ENCODE measurements at regions of chr14 and their contacts with region 1.

Region 1: GRCh38 chr14:34227834-34228649 is 234.0 kb downstream of the SPTSSA start:
- DNase-seq: peak; percentile 76 to 82
- H3K4me3 ChIP-seq: no peak overlapping the region
- H3K4me3 Mint-ChIP-seq: peak overlapping the region; percentile 61
- H3K27ac Mint-ChIP-seq: peak overlapping the region; percentile 80
- H3K4me1 ChIP-seq: peaks cover 51% of the 10 kb centered on the region
- H3K4me1 Mint-ChIP-seq: peaks cover 54% of the 10 kb centered on the region
- H3K27me3 ChIP-seq: no peaks in the 10 kb centered on the region
- H3K27me3 Mint-ChIP-seq: no peaks in the 10 kb centered on the region
- CTCF ChIP-seq: peak; percentile 70 to 92

Region 2: DNA sequence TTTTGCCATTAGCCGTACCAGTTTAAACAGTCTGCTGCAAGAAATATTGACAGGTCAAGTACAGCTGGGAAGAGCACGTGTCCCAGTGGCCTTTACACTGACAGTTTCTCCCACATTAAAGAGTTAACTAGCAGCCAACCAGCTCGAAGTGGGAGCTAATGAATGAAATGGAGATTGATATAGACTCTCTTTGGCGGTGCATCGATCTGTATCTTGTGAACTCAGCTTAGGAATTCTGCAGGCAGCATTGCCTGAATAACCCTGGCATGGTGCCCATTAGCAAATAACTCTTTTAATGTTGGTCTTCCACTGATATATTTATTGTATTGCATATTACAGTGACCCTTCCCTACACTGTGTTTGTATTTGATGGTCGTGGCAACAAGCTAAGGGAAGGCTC is 596.6 kb before region 1 on chr14:
- CTCF ChIA-PET with region 1: no interaction called
- POLR2A ChIA-PET with region 1: no interaction called
- intact Hi-C with region 1: no loop called
- DNase-seq: no peak
- H3K4me3 ChIP-seq: no peak overlapping the region
- H3K4me3 Mint-ChIP-seq: no peak overlapping the region
- H3K27ac Mint-ChIP-seq: no peak overlapping the region
- H3K4me1 ChIP-seq: no peaks in the 10 kb centered on the region
- H3K4me1 Mint-ChIP-seq: no peaks in the 10 kb centered on the region
- H3K27me3 ChIP-seq: no peaks in the 10 kb centered on the region
- H3K27me3 Mint-ChIP-seq: peaks cover 13% of the 10 kb centered on the region
- CTCF ChIP-seq: no peak

Region 3: GRCh38 chr14:33810308-33810707 is 417.7 kb before region 1 on chr14:
- CTCF ChIA-PET with region 1: no interaction called
- POLR2A ChIA-PET with region 1: no interaction called
- intact Hi-C with region 1: no loop called
- DNase-seq: no peak
- H3K4me3 ChIP-seq: no peak overlapping the region
- H3K4me3 Mint-ChIP-seq: no peak overlapping the region
- H3K27ac Mint-ChIP-seq: no peak overlapping the region
- H3K4me1 ChIP-seq: no peaks in the 10 kb centered on the region
- H3K4me1 Mint-ChIP-seq: no peaks in the 10 kb centered on the region
- H3K27me3 ChIP-seq: no peaks in the 10 kb centered on the region
- H3K27me3 Mint-ChIP-seq: peaks cover 3% of the 10 kb centered on the region
- CTCF ChIP-seq: no peak

Region 4: DNA sequence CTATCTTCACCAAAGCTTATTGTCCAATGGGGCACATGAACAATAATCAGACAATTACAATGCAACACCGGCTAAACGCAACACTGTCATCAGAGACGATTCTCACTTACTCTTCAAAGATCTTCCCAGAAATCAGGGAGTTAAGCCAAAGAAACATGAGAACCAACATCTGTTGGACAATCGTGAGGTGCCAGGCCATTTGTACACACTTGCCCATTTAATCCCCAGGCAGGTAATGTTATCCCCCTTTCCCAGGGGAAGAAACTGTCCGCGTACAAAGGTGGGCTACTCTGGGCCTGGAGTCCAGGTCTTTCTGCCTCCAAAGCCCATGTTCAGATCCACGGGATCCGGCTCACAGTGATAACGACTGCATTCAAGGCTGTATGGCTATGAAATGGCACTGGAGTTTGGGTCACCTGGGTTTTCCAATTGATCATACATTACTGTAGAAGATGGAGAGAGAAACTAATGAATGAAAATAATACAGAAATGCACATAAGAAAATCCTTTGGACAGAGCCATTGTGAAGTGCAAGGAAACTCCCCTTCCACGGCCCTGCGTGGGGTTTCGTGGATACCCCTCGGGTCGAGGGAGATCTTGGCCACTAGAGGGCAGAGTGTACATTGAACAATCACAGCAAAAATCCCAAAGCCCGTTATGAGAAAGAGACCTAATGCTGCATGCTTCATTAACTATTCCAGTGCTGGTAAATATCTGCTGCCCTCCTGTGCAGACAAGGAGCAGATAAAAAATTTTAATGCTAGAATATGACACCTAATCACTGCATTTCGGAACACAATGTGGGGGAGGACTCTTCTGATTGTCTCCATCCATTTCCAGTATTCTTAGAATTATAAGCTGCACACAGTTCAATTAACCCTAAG is 388.6 kb before region 1 on chr14:
- CTCF ChIA-PET with region 1: no interaction called
- POLR2A ChIA-PET with region 1: no interaction called
- intact Hi-C with region 1: loop called (anchors 1 kb)
- DNase-seq: peak; percentile 54 to 73
- H3K4me3 ChIP-seq: no peak overlapping the region
- H3K4me3 Mint-ChIP-seq: no peak overlapping the region
- H3K27ac Mint-ChIP-seq: no peak overlapping the region
- H3K4me1 ChIP-seq: peaks cover 10% of the 10 kb centered on the region
- H3K4me1 Mint-ChIP-seq: no peaks in the 10 kb centered on the region
- H3K27me3 ChIP-seq: no peaks in the 10 kb centered on the region
- H3K27me3 Mint-ChIP-seq: no peaks in the 10 kb centered on the region
- CTCF ChIP-seq: peak; percentile 74 to 78

Region 5: GRCh38 chr14:33950320-33951182 is 277.5 kb before region 1 on chr14 and contains the start of gene EGLN3:
- CTCF ChIA-PET with region 1: no interaction called
- POLR2A ChIA-PET with region 1: no interaction called
- intact Hi-C with region 1: loop called (anchors 2 kb)
- DNase-seq: peak; percentile 90 to 94
- H3K4me3 ChIP-seq: peak within 1 kb of the TSS; percentile 57
- H3K4me3 Mint-ChIP-seq: peak within 1 kb of the TSS; percentile 92
- H3K27ac Mint-ChIP-seq: peak within 1 kb of the TSS; percentile 70
- H3K4me1 ChIP-seq: peaks cover 9% of the 10 kb centered on the region
- H3K4me1 Mint-ChIP-seq: peaks cover 10% of the 10 kb centered on the region
- H3K27me3 ChIP-seq: no peaks in the 10 kb centered on the region
- H3K27me3 Mint-ChIP-seq: no peaks in the 10 kb centered on the region
- CTCF ChIP-seq: no peak
- total RNA-seq, gene EGLN3: 9.5 and 12.0 TPM in 2 replicates

Region 6: DNA sequence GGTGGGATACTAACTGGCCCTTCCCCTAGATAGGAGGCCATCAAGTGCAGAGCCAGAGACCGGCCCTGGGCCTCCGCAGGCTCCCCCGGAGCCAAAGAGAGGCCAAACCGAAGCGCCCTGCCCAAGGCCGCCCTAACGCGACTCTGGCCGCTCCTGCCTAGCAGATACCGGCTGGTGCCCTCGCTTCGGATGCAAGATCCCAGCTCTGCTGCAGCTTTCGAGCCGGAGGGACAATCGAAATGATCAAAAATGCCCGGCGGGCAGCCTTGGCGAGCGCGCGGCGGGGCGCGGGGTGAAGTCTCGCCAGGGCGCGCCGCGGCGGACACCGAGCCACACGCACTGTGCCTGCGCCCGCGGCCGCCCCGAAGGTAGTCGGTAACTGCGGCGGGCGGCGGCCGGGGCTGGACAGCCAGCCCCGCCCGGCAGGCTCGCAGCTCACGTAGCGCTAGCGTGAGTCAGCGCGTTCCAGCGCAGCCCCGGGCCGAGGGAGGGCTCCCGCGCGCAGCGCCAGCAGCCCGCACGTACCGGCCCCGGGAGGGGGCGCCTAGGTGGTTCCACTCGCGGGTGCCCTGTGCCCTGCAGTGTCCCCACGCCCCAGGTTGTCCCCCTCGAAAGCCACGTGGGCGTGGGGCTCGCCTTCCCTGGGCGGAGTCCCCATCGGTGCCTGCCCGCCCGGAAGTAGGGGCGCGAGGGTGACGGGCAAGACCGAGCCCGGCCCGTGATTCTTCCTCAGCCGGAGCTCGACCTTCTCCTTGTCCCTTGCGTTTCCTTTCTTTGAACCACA is 168.0 kb before region 1 on chr14:
- CTCF ChIA-PET with region 1: interaction called, 4 read pairs
- POLR2A ChIA-PET with region 1: no interaction called
- intact Hi-C with region 1: loop called (anchors 10 kb)
- DNase-seq: peak; percentile 82 to 88
- H3K4me3 ChIP-seq: peak overlapping the region; percentile 65
- H3K4me3 Mint-ChIP-seq: peak overlapping the region; percentile 89
- H3K27ac Mint-ChIP-seq: peak overlapping the region; percentile 96
- H3K4me1 ChIP-seq: peaks cover 19% of the 10 kb centered on the region
- H3K4me1 Mint-ChIP-seq: peaks cover 7% of the 10 kb centered on the region
- H3K27me3 ChIP-seq: no peaks in the 10 kb centered on the region
- H3K27me3 Mint-ChIP-seq: no peaks in the 10 kb centered on the region
- CTCF ChIP-seq: peak in 1 of 2 experiments; percentile 18

Region 7: DNA sequence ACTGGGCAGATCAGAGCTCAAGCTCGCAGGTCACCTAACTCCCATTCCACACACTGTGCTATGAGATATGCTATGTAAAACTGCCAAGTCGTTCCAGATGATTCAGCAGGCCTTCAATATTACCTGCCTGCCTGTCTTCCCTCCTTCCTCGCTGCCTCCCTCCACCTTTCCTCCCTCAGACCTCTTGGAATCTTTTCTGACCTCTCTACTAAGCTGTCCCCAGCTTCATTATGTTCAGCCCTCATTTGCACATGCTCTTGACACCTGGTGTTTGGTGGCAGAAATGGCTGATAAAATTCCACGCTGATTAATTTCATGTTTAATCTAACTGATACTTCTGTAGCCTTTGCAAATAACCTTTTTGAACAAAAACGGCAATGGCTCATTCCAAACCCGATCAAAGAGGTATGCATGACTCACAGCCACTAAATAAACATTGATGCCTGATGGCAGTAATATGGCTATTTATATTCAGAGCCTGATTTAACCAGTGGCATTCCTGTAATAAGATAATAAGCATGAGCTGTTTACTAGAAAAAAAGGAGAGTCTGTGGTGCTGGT is 146.4 kb before region 1 on chr14:
- CTCF ChIA-PET with region 1: no interaction called
- POLR2A ChIA-PET with region 1: no interaction called
- intact Hi-C with region 1: no loop called
- DNase-seq: peak; percentile 29 to 54
- H3K4me3 ChIP-seq: no peak overlapping the region
- H3K4me3 Mint-ChIP-seq: peak overlapping the region; percentile 27
- H3K27ac Mint-ChIP-seq: peak overlapping the region; percentile 73
- H3K4me1 ChIP-seq: peaks cover 49% of the 10 kb centered on the region
- H3K4me1 Mint-ChIP-seq: peaks cover 29% of the 10 kb centered on the region
- H3K27me3 ChIP-seq: no peaks in the 10 kb centered on the region
- H3K27me3 Mint-ChIP-seq: no peaks in the 10 kb centered on the region
- CTCF ChIP-seq: no peak

Region 8: GRCh38 chr14:34300882-34301734 is 73.1 kb after region 1 on chr14:
- CTCF ChIA-PET with region 1: interaction called, 7 read pairs
- POLR2A ChIA-PET with region 1: interaction called, 7 read pairs
- intact Hi-C with region 1: loop called (anchors 2 kb)
- DNase-seq: peak in 1 of 2 experiments; percentile 64
- H3K4me3 ChIP-seq: no peak overlapping the region
- H3K4me3 Mint-ChIP-seq: no peak overlapping the region
- H3K27ac Mint-ChIP-seq: no peak overlapping the region
- H3K4me1 ChIP-seq: peaks cover 13% of the 10 kb centered on the region
- H3K4me1 Mint-ChIP-seq: peaks cover 18% of the 10 kb centered on the region
- H3K27me3 ChIP-seq: no peaks in the 10 kb centered on the region
- H3K27me3 Mint-ChIP-seq: no peaks in the 10 kb centered on the region
- CTCF ChIP-seq: peak; percentile 35 to 56